Head of caudate nucleus (tissue), 42 donors: ENCODE measurements at regions of chr18 and their contacts with region 1.

Region 1: GRCh38 chr18:44680266-44681075 is at the start of gene SETBP1:
- DNase-seq: peak in 40 of 42 donors; percentile 18 to 71 (median 52)

Region 2: DNA sequence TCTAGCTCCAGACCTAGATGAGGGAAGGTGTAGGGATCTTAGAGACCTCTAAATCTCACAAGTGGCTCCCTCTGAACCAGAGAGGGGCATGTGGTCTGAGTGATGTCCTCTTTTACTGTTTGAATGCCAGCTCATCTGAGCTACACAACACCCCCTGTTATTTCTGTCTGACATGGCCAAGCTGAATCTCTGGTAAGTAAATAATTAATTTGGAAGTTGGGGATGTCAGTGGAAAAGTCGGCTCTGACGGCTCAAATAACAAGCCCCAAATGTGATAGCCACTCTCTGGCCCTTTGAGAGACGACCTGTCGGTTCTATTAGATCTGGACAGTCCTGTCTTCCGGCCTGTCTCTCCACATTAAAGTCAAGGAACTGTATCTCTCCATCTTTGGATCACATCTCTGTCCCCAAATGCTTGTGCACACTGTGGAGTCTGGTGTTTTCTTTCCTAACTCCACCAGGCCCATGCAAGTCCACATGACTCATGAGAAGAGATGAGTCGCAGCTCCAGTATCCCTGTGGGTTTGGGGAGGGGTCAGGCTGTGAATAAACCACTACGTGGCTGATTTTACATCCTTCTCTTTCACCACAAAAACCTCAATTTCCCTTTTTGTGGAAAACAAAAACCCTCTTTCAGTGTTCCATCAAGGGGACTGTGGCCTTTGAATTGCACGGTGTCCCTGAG is 52.7 kb after region 1 on chr18:
- intact Hi-C with region 1: loop called (anchors 5 kb)
- DNase-seq: peak in 10 of 42 donors; percentile 11 to 62 (median 34)

Region 3: GRCh38 chr18:44799907-44800421 is 119.5 kb after region 1 on chr18:
- intact Hi-C with region 1: loop called (anchors 10 kb)
- DNase-seq: no peak

Region 4: DNA sequence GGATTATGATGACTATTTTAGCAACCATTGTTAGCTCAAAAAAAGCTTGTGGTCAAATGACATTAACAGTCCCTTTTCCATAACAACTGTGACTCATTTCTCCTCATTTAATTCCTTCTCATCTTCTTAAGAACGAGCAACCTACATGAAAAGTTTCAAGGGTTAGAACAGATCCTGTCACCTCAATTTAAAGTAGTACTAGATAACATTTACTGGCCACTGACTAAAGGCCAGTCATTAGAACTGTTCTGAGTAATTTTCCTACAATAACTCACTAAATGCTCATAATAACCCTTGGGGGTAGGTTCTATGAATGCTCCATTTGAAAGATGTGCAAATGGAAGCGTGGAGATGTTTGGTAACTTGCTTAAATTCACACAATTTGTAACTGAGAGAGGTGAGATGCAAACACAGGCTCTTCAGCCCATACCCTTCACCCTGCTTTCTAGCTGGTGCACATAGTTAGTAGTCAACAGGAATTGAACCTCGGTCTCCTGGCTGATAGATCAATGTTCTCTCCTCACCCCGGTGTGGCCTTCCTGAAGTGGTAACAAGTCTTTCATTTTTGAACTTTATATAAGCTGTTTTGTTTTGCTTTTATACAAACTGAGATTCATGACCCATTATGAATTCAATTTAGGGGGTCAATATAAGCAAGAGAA is 212.7 kb after region 1 on chr18:
- intact Hi-C with region 1: loop called (anchors 5 kb)
- DNase-seq: no peak

Region 5: GRCh38 chr18:45384137-45384961 is 703.9 kb after region 1 on chr18:
- intact Hi-C with region 1: loop called (anchors 10 kb)
- DNase-seq: peak; percentile 20 to 83 (median 58)